ENCODE measurements at regions of chr11 and their contacts with region 1.

Region 1: DNA sequence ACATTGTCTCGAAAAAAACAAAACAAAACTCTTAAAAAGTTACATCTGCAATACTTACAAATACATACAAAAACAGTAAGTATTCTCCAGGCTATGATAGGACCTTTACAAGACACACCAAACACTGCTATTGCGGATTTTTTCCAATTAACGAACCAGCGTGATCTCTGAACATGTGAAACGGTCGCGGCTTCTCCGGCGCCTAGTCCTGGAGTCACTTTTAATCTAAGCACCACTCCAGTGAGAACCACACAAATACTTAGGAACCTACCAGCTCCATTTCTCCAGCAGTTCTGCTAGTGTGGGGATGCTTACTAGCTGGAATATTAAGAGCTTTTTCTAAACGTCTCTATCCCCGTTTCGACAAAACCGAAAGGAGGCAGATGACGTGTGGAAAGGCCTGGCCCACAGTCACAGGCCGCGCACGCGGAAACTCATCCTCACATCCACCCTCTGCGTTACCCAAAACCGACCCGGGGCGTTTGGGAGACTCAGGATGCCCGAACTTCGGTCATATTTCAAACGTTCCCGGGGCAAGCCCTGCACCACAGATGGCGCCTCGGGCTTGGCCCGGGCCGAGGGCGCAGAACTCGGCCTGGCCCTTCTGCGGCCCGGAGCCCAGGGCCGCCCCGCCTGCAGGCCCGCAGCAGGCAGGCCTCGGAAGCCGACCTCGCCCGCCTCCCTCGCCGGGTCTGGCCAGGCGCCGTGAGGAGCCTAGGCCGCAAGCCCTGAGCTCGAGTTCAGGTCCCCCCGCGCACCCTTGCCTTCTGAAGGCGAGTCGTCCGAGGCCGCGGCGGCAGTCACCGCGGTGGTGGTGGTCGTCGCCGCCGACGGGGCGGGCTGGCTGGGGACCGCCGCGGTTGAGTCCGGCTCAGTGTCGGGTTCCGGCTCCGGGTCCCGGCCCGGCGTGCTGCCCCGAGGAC is 575 bp downstream of the FNBP4 start:
- DNase-seq: peak; percentile 93
- H3K4me3 Mint-ChIP-seq: peak overlapping the region; percentile 100
- H3K27ac Mint-ChIP-seq: peak overlapping the region; percentile 100
- H3K4me1 Mint-ChIP-seq: peaks cover 21% of the 10 kb centered on the region
- H3K27me3 Mint-ChIP-seq: no peaks in the 10 kb centered on the region

Region 2: DNA sequence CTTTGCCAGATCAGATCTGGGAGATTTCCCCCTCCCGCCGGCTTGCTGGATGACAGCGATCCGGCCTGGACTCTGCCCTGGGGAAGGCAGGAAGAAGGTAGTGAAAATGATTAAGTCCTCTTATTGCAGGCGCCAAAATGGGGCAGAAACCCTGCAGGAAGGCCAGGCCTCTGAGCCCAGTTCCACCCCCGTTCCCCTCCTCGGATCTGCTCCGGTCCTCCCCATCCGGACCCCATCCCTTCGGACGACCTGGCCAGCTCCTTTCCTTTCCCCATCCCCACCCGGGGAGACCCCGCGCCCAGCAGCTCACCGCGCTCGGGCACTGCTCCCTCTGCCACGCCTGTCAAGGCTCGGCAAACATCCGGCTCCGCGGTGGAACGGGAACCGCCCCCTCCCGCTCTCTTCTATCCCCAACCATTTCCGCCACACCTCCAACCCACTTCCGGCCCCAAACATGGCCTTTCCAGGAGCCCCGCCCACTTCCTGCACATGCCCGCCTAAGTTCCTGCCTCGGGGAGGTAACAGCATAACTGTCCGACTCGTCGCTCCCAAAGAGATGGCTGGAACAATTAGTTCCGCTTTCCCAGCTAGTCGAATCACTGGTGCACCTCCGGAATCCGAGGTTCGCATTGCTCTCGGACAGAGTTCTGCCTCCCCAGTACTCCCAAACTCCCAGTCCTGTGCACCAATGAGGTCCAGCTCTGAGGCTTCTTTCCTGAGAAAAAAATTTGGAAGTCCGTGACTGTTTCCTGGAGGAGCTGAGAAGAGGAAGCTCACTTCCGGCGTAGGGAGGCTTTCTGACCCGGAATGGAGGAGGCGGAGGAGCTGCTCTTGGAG is 1066.1 kb before region 1 on chr11 and contains the starts of genes ARHGAP1 and ZNF408:
- intact Hi-C with region 1: loop called (anchors 2 kb)
- DNase-seq: peak; percentile 100
- H3K4me3 Mint-ChIP-seq: peak within 1 kb of the TSS; percentile 99
- H3K27ac Mint-ChIP-seq: peak within 1 kb of the TSS; percentile 98
- H3K4me1 Mint-ChIP-seq: peaks cover 38% of the 10 kb centered on the region
- H3K27me3 Mint-ChIP-seq: peaks cover 3% of the 10 kb centered on the region
- total RNA-seq, gene ARHGAP1: 59.1 and 61.7 TPM in 2 replicates
- total RNA-seq, gene ZNF408: 12.9 and 14.1 TPM in 2 replicates

Region 3: GRCh38 chr11:47578524-47579460 is 187.8 kb before region 1 on chr11 and contains the starts of genes KBTBD4 and NDUFS3:
- intact Hi-C with region 1: loop called (anchors 1 kb)
- DNase-seq: peak; percentile 98
- H3K4me3 Mint-ChIP-seq: peak within 1 kb of the TSS; percentile 94
- H3K27ac Mint-ChIP-seq: peak within 1 kb of the TSS; percentile 96
- H3K4me1 Mint-ChIP-seq: peaks cover 27% of the 10 kb centered on the region
- H3K27me3 Mint-ChIP-seq: no peaks in the 10 kb centered on the region
- total RNA-seq, gene KBTBD4: 16.4 and 16.7 TPM in 2 replicates
- total RNA-seq, gene NDUFS3: 151 and 159 TPM in 2 replicates

Region 4: GRCh38 chr11:47642099-47642855 is 124.3 kb before region 1 on chr11 and contains the start of gene MTCH2:
- intact Hi-C with region 1: loop called (anchors 1 kb)
- DNase-seq: peak; percentile 99
- H3K4me3 Mint-ChIP-seq: peak within 1 kb of the TSS; percentile 98
- H3K27ac Mint-ChIP-seq: peak within 1 kb of the TSS; percentile 98
- H3K4me1 Mint-ChIP-seq: peaks cover 15% of the 10 kb centered on the region
- H3K27me3 Mint-ChIP-seq: no peaks in the 10 kb centered on the region
- total RNA-seq, gene MTCH2: 128 and 136 TPM in 2 replicates

Region 5: GRCh38 chr11:47715082-47715669 is 51.4 kb before region 1 on chr11 and contains the start of gene AGBL2:
- intact Hi-C with region 1: loop called (anchors 1 kb)
- DNase-seq: peak; percentile 97
- H3K4me3 Mint-ChIP-seq: peak within 1 kb of the TSS; percentile 91
- H3K27ac Mint-ChIP-seq: peak within 1 kb of the TSS; percentile 94
- H3K4me1 Mint-ChIP-seq: peaks cover 18% of the 10 kb centered on the region
- H3K27me3 Mint-ChIP-seq: no peaks in the 10 kb centered on the region
- total RNA-seq, gene AGBL2: 4.2 and 4.5 TPM in 2 replicates

Region 6: GRCh38 chr11:47797633-47798032 is 31.1 kb after region 1 on chr11:
- intact Hi-C with region 1: loop called (anchors 1 kb)
- DNase-seq: peak; percentile 72
- H3K4me3 Mint-ChIP-seq: peak overlapping the region; percentile 2
- H3K27ac Mint-ChIP-seq: peak overlapping the region; percentile 72
- H3K4me1 Mint-ChIP-seq: peaks cover 12% of the 10 kb centered on the region
- H3K27me3 Mint-ChIP-seq: no peaks in the 10 kb centered on the region

Region 7: GRCh38 chr11:47847892-47848635 is 81.5 kb after region 1 on chr11 and contains the start of gene NUP160:
- intact Hi-C with region 1: loop called (anchors 1 kb)
- DNase-seq: peak; percentile 98
- H3K4me3 Mint-ChIP-seq: peak within 1 kb of the TSS; percentile 99
- H3K27ac Mint-ChIP-seq: peak within 1 kb of the TSS; percentile 99
- H3K4me1 Mint-ChIP-seq: peaks cover 38% of the 10 kb centered on the region
- H3K27me3 Mint-ChIP-seq: no peaks in the 10 kb centered on the region
- total RNA-seq, gene NUP160: 102 and 104 TPM in 2 replicates

Measured in activated CD4-positive, alpha-beta T cell treated with anti-CD3 and anti-CD28 coated beads, Interleukin-2, amount 10 ng/mL, durations not matched to agents 24 days and 14 days (primary cell).